Activated naive CD4-positive, alpha-beta T cell treated with anti-CD3 and anti-CD28 coated beads for 36 hours (primary cell): ENCODE measurements at regions of chr5 and their contacts with region 1.

Region 1: DNA sequence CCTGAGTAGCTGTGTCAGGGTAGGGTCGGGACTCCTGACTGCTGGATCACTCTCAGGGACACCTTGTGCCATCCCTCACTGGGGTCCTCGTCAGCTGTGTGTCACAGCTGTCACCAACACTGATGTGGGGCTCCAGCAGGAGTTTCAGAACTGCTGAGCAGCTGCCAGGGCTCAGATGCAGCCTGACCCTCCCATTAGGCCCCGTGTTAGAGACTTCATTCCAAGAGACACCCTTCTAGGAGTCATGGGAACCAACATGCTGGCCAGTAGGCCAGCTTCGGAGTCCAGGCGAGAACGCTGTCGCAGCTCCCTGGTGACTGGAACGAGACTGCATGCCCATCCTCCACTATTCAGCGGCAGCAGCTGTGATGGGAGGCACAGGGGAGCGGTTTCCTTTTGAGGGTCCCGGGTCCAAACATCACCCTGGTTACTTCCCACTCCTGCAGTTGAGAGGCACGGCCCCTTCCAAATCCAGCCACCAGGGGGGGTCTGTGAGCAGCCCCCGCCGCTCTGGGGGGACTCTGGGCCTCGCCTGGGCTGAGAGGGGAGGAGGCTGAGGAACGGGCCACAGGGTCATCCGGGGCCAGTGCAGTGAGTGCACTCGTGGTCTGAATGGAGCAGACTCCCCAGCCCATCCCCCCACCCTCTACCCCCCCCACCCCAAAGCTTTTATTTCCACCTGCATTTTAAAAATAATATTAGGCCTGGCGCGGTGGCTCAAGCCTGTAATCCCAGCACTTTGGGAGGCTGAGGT is 12.6 kb upstream of the TCF7 start:
- DNase-seq: peak; percentile 78
- H3K4me3 Mint-ChIP-seq: peak overlapping the region; percentile 12
- H3K27ac Mint-ChIP-seq: peak overlapping the region; percentile 24
- H3K4me1 Mint-ChIP-seq: peaks cover 95% of the 10 kb centered on the region
- H3K27me3 Mint-ChIP-seq: no peaks in the 10 kb centered on the region

Region 2: GRCh38 chr5:132674671-132675506 is 1427.0 kb before region 1 on chr5:
- CTCF ChIA-PET with region 1: no interaction called
- intact Hi-C with region 1: no loop called
- DNase-seq: no peak
- H3K4me3 Mint-ChIP-seq: no peak overlapping the region
- H3K27ac Mint-ChIP-seq: no peak overlapping the region
- H3K4me1 Mint-ChIP-seq: peaks cover 3% of the 10 kb centered on the region
- H3K27me3 Mint-ChIP-seq: no peaks in the 10 kb centered on the region

Region 3: GRCh38 chr5:133539818-133540217 is 562.0 kb before region 1 on chr5:
- CTCF ChIA-PET with region 1: no interaction called
- intact Hi-C with region 1: no loop called
- DNase-seq: no peak
- H3K4me3 Mint-ChIP-seq: no peak overlapping the region
- H3K27ac Mint-ChIP-seq: no peak overlapping the region
- H3K4me1 Mint-ChIP-seq: no peaks in the 10 kb centered on the region
- H3K27me3 Mint-ChIP-seq: peaks cover 28% of the 10 kb centered on the region

Region 4: GRCh38 chr5:134070725-134071613 is 30.9 kb before region 1 on chr5:
- CTCF ChIA-PET with region 1: interaction called, 27 read pairs
- intact Hi-C with region 1: loop called (anchors 1 kb)
- DNase-seq: peak; percentile 85
- H3K4me3 Mint-ChIP-seq: peak overlapping the region; percentile 79
- H3K27ac Mint-ChIP-seq: peak overlapping the region; percentile 97
- H3K4me1 Mint-ChIP-seq: peaks cover 70% of the 10 kb centered on the region
- H3K27me3 Mint-ChIP-seq: no peaks in the 10 kb centered on the region

Region 5: GRCh38 chr5:134086943-134087305 is 14.9 kb before region 1 on chr5:
- CTCF ChIA-PET with region 1: interaction called, 24 read pairs
- intact Hi-C with region 1: loop called (anchors 1 kb)
- DNase-seq: peak; percentile 85
- H3K4me3 Mint-ChIP-seq: peak overlapping the region; percentile 59
- H3K27ac Mint-ChIP-seq: peak overlapping the region; percentile 86
- H3K4me1 Mint-ChIP-seq: peaks cover 82% of the 10 kb centered on the region
- H3K27me3 Mint-ChIP-seq: no peaks in the 10 kb centered on the region

Region 6: DNA sequence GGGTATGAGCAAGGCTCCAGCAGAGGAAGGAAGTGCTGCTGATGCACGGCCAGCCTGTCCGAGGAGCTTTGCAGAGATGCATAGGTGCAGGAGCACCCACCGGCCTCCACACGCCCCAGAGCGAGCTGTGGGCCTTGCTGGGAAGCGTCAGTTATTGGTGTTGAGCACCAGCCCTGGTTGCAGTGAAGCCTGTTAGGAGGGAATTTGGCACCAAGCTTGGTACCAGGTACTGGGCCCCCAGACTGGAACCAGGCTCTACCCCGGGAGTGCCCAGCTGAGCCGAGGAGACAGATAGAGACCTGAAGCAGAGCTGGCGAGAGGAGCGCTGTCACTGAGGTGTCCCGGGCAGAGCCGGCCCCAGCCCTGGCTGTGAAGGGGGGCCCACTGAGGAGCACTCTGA is 17.9 kb after region 1 on chr5:
- CTCF ChIA-PET with region 1: interaction called, 26 read pairs
- intact Hi-C with region 1: no loop called
- DNase-seq: no peak
- H3K4me3 Mint-ChIP-seq: peak overlapping the region; percentile 77
- H3K27ac Mint-ChIP-seq: peak overlapping the region; percentile 86
- H3K4me1 Mint-ChIP-seq: peaks cover 84% of the 10 kb centered on the region
- H3K27me3 Mint-ChIP-seq: no peaks in the 10 kb centered on the region

Region 7: GRCh38 chr5:134140530-134141201 is 38.8 kb after region 1 on chr5:
- CTCF ChIA-PET with region 1: interaction called, 9 read pairs
- intact Hi-C with region 1: loop called (anchors 1 kb)
- DNase-seq: peak; percentile 83
- H3K4me3 Mint-ChIP-seq: no peak overlapping the region
- H3K27ac Mint-ChIP-seq: peak overlapping the region; percentile 82
- H3K4me1 Mint-ChIP-seq: peaks cover 66% of the 10 kb centered on the region
- H3K27me3 Mint-ChIP-seq: no peaks in the 10 kb centered on the region

Region 8: DNA sequence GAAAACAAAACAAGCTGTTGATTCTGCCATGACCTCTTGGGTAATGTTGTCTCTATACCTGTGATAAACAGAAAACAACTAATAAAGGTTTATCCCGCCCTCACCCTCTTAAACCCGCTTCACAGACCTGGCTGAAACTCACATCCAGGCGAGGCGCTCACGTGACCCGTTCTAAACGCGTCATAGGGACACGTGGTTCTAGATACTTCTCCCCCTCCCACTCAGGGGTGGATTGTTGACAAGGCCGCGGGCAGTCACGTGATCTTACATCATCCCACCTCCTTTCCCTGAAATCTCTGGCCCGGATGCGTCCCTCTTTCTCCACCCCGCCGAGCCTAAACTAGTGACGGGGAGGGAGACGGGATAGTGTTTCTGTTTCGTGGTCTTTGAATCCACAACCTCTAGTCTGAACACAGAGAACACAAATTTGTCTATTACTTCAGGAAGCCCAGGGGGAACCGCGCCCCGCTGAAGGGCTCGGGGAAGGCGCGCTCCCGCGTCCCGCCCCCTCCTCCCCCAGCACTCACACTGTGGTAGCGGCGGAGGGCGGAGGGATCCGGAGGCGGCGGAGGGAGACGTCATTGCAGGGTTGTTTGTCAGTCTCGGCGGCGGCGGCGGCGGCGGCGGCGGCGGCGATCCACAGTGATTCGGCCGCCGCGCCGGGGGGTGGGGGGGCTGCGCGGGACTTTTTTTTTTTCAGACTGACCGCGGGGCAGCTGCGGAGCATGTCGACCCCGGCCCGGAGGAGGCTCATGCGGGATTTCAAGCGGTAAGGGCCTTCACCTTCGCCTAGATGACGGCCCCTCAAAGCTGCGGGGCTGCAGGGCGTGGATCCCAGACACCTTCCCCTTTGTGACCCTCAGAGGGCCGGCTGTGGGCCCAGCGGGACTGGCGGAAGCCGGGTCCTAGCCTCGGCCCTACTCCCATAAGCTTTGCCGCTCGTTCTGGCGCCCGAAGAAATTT is 269.3 kb after region 1 on chr5 and contains the start of gene UBE2B:
- CTCF ChIA-PET with region 1: no interaction called
- intact Hi-C with region 1: loop called (anchors 5 kb)
- DNase-seq: peak; percentile 99
- H3K4me3 Mint-ChIP-seq: peak within 1 kb of the TSS; percentile 98
- H3K27ac Mint-ChIP-seq: peak within 1 kb of the TSS; percentile 99
- H3K4me1 Mint-ChIP-seq: peaks cover 58% of the 10 kb centered on the region
- H3K27me3 Mint-ChIP-seq: no peaks in the 10 kb centered on the region
- total RNA-seq, gene UBE2B: 116 to 129 TPM